MCF 10A (cell line): ENCODE measurements at regions of chr3 and their contacts with region 1.

Region 1: DNA sequence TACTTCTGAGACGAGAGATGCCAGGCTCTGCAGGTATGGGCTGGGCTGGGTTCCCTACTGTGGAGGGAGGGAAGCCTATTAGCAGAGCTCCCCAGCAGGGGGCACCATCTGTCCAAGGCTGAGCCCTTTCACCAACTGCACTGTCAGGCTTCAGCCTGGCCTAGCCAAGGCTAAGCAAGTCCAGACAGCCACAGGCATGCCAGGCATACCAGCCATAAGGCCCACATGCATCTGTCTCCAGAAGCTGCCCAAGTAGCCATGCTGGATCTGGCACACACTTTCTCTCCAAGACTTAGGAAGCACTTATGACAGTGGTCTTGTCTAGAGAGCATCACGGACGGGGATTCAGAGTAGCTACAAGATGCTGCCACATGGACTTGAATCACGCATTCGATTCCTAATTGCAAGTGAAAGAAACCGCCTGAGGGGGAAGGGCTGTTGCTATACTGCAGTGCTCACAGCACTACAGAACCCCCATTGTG is 28.3 kb downstream of the RUVBL1 start:
- DNase-seq: peak; percentile 88
- H3K4me3 Mint-ChIP-seq: no peak overlapping the region
- H3K27ac Mint-ChIP-seq: peak overlapping the region; percentile 67
- H3K4me1 Mint-ChIP-seq: peaks cover 8% of the 10 kb centered on the region
- H3K27me3 Mint-ChIP-seq: no peaks in the 10 kb centered on the region
- CTCF ChIP-seq: peak; percentile 88

Region 2: DNA sequence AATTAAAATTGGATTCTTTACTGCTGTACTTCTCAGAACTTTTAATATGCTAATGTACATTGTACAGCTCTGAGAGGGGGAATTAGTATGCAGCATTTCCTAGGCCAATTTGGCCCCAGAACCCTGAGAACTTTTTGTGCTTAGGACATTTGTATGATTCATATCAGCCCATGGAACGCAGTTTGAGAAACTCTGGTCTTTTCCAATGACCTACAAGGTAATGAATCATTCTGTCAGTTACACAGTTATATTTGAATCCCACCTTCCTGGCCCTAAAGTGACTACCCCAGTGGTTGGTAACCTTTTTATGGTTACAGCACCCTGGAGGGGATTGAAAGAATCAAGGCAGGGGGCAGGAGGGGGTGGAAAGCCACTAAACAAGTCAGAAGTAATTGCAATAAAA is 205.8 kb before region 1 on chr3:
- CTCF ChIA-PET with region 1: no interaction called
- POLR2A ChIA-PET with region 1: no interaction called
- intact Hi-C with region 1: no loop called
- DNase-seq: peak; percentile 69
- H3K4me3 Mint-ChIP-seq: no peak overlapping the region
- H3K27ac Mint-ChIP-seq: peak overlapping the region; percentile 85
- H3K4me1 Mint-ChIP-seq: peaks cover 33% of the 10 kb centered on the region
- H3K27me3 Mint-ChIP-seq: no peaks in the 10 kb centered on the region
- CTCF ChIP-seq: no peak

Region 3: DNA sequence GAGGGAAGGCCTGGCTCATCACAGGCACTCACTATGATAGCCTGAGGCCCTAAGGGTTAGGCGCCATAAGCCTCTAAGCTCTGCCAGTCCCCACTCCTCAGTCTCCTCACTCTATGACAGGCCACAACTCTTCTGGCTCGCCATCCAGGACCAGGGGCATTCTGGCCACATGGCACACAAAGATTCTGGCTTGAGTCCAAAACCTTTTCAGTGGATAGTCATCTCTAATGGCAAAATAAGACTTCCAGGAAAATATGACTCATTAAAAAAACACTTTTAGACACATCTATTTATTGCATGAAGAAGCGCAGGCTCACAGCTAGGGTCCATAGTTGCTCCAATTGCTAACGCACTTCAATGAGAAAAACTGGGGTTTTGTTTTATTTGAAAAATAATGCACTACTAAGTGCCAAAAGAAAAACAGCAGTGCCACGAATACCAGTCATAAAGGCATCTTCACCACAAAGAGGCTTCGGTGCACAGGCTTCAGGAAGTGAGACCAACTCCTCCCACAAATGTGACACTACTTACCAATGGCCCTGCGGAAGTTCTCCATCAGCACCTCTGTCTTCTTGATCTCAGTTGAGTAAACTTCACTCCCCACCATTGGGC is 17.2 kb after region 1 on chr3:
- CTCF ChIA-PET with region 1: interaction called, 15 read pairs
- POLR2A ChIA-PET with region 1: interaction called, 4 read pairs
- intact Hi-C with region 1: no loop called
- DNase-seq: peak; percentile 97
- H3K4me3 Mint-ChIP-seq: no peak overlapping the region
- H3K27ac Mint-ChIP-seq: peak overlapping the region; percentile 33
- H3K4me1 Mint-ChIP-seq: peaks cover 25% of the 10 kb centered on the region
- H3K27me3 Mint-ChIP-seq: no peaks in the 10 kb centered on the region
- CTCF ChIP-seq: no peak

Region 4: DNA sequence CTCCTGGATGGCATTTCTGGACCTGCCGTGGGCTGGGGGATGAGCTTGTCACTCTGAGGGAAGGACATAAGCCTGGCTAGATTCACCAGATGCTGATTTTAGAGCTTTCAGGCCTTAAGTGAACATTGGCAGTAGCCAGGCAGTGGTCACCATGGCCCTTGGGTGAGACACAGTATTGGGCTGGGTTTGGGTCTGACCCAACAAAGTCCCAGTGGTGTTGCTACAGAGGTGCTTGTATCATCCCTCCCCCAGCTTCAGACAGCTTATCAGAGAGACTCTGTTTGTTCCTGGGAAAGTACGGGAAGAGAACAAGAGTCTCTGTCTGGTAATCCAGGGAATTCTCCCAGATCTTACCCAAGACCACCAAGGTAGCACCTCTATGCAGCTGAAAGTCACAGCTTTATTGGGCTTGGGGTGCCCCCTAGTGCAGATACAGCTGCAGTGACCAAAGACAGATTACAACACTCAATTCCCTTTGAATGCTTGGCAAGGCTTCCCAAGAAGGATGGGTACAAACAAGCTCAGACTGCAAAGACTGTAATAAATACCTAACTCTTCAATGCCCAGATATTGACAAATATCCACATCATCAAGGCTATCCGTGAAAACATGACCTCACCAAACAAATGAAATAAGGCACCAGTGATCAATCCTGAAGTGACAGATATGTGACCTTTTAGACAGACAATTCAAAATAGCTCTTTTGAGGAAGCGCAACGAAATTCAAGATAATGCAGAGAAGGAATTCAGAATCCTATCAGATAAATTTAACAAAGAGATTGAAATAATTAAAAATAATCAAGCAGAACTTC is 38.2 kb after region 1 on chr3:
- CTCF ChIA-PET with region 1: interaction called, 37 read pairs
- POLR2A ChIA-PET with region 1: interaction called, 4 read pairs
- intact Hi-C with region 1: loop called (anchors 1 kb)
- DNase-seq: peak; percentile 75
- H3K4me3 Mint-ChIP-seq: no peak overlapping the region
- H3K27ac Mint-ChIP-seq: no peak overlapping the region
- H3K4me1 Mint-ChIP-seq: no peaks in the 10 kb centered on the region
- H3K27me3 Mint-ChIP-seq: peaks cover 18% of the 10 kb centered on the region
- CTCF ChIP-seq: peak; percentile 80

Region 5: DNA sequence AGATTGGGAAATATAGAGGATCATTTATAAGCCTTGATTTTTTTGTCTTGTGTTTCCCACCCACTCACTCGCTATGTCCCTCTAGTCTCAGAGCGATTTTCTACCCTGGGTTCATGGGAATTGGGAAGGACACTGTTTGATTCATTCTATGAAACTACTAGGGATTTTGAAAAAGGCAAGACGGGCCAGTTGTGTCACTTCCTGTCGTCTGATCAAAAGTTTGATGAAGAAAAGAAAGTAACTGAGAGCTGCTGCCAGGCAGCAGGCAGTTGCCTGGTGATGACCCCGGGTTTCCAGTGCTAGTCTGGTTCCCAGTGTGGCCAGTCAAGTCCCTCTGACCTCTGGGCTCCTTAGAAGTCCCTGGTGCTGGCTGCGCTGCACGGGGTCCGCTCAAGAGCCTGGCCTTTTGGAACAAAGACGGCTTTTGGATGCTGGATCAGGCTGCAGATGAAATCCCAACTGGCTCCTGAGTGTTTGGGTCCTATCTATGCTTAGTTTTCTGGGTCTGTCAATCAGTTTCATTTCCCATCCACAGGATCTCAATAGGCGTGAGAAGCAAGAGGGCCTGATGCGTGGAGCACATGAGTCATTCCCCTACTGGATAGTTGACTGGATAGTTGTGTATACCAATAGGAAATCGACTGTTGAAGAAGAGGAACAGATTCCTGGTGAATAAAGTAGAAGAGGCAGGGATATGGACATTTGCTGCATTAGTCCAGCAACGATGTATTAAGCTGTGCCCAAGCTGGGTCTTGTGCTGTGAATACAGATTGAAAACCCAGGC is 147.7 kb after region 1 on chr3:
- CTCF ChIA-PET with region 1: no interaction called
- POLR2A ChIA-PET with region 1: no interaction called
- intact Hi-C with region 1: no loop called
- DNase-seq: no peak
- H3K4me3 Mint-ChIP-seq: no peak overlapping the region
- H3K27ac Mint-ChIP-seq: no peak overlapping the region
- H3K4me1 Mint-ChIP-seq: no peaks in the 10 kb centered on the region
- H3K27me3 Mint-ChIP-seq: no peaks in the 10 kb centered on the region
- CTCF ChIP-seq: no peak

Region 6: GRCh38 chr3:128416578-128417211 is 321.4 kb after region 1 on chr3:
- CTCF ChIA-PET with region 1: no interaction called
- POLR2A ChIA-PET with region 1: no interaction called
- intact Hi-C with region 1: loop called (anchors 5 kb)
- DNase-seq: peak; percentile 96
- H3K4me3 Mint-ChIP-seq: peak overlapping the region; percentile 48
- H3K27ac Mint-ChIP-seq: no peak overlapping the region
- H3K4me1 Mint-ChIP-seq: peaks cover 18% of the 10 kb centered on the region
- H3K27me3 Mint-ChIP-seq: peaks cover 22% of the 10 kb centered on the region
- CTCF ChIP-seq: no peak

Region 7: DNA sequence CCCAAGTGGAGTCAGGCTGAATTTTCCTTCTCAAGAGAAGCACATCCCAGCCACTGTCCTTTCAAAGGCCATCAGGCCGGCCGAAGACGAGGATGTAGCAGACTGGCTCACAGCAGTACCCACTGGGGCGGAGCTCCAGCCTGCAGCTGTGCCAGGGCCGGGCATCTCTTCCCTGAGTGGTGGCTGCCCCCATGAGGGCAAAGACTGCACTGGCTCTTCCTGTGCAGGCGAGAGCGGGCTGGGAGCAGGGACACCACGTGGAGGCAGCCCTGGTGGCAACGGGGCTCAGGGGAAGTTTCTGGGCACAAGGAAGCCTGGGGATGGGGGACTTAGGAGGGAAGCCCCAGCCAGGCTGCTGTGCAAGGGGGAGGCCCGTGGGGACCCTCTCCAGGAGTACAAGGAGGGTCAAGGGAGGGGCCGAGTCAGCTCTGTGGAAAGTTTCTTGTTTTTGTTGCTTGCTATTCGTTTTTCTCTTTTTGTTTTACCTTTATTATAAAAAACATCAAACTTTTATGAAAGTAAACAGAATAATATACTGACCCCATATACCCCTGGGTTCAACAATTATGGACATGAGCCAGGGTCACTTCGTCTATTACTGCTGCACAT is 489.3 kb after region 1 on chr3:
- CTCF ChIA-PET with region 1: interaction called, 5 read pairs
- POLR2A ChIA-PET with region 1: no interaction called
- intact Hi-C with region 1: loop called (anchors 1 kb)
- DNase-seq: peak; percentile 85
- H3K4me3 Mint-ChIP-seq: no peak overlapping the region
- H3K27ac Mint-ChIP-seq: no peak overlapping the region
- H3K4me1 Mint-ChIP-seq: no peaks in the 10 kb centered on the region
- H3K27me3 Mint-ChIP-seq: no peaks in the 10 kb centered on the region
- CTCF ChIP-seq: peak; percentile 87